ENCODE measurements at regions of chr16 and their contacts with region 1.

Region 1: DNA sequence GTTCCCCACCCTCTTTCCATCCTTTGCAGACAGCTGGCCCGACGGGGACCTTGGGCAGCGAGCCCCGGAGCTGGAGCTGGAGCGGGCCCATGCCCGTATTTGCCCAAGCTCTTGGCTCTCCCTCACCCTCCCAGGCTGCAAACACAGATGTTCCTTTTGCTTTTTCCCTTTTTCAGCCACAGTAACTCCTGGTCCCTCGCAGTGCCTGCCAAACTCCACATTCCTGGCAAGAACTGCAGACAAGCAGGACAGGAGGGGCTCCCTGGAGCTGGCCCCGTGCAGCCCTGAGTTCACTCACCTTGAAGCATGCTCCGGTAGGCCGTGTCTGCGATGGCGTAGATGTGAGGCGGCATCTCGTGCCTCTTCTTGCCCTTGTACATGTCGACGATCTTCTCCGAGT is 33.9 kb downstream of the MYH11 start:
- DNase-seq: no peak
- H3K4me3 Mint-ChIP-seq: no peak overlapping the region
- H3K27ac Mint-ChIP-seq: no peak overlapping the region
- H3K4me1 Mint-ChIP-seq: no peaks in the 10 kb centered on the region
- H3K27me3 Mint-ChIP-seq: peaks cover 2% of the 10 kb centered on the region

Region 2: DNA sequence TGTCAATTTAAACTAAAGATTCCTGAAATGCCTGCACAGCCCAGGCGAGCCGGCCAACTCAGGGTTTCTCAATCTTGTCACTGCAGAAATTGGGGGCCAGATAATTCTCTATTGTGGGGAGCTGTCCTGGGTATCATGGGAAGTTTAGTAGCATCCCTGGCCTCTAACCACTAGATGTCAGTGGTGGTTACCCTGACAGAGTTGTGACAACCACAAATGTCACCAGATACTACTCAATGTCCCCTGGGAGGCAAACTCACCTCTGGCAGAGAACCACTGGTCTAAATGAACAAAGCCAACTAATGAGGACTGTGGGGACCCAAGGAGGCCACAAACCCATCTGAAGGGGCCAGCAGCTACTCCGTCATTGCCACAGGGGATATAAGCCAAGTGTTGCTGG is 57.1 kb before region 1 on chr16:
- CTCF ChIA-PET with region 1: interaction called, 21 read pairs
- POLR2A ChIA-PET with region 1: no interaction called
- intact Hi-C with region 1: no loop called
- DNase-seq: peak; percentile 31
- H3K4me3 Mint-ChIP-seq: no peak overlapping the region
- H3K27ac Mint-ChIP-seq: no peak overlapping the region
- H3K4me1 Mint-ChIP-seq: no peaks in the 10 kb centered on the region
- H3K27me3 Mint-ChIP-seq: peaks cover 14% of the 10 kb centered on the region

Region 3: GRCh38 chr16:15777533-15778203 is 45.3 kb before region 1 on chr16:
- CTCF ChIA-PET with region 1: interaction called, 12 read pairs
- POLR2A ChIA-PET with region 1: no interaction called
- intact Hi-C with region 1: no loop called
- DNase-seq: peak; percentile 35
- H3K4me3 Mint-ChIP-seq: no peak overlapping the region
- H3K27ac Mint-ChIP-seq: no peak overlapping the region
- H3K4me1 Mint-ChIP-seq: no peaks in the 10 kb centered on the region
- H3K27me3 Mint-ChIP-seq: no peaks in the 10 kb centered on the region

Region 4: DNA sequence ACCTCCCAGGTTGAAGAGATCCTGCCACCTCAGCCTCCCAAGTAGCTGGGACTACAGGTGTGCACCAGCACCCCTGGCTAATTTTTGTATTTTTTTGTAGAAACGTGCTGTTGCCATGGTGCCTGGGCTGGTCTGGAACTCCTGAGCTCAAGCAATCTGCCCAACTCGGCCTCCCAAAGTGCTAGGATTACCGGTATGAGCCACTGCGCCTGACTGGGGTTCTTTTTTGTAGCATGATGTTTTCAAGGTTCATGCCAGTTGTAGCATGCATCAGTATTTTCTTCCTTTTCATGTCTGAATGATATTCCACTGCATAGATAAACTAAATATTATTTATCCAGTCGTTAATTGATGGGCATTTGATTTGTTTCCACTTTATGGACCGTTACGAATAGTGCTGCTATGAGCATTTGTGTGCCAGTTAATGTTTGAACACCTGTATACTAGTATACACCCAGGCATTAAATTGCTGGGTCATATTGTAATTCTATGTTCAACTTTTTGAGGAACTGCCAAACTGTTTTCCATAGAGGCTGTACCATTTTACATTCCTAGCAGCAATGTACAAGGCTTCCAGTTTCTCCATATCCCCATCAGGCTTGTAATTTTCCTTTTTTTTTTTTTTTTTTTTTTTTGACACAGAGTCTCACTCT is 90.2 kb after region 1 on chr16:
- CTCF ChIA-PET with region 1: no interaction called
- POLR2A ChIA-PET with region 1: no interaction called
- intact Hi-C with region 1: no loop called
- DNase-seq: no peak
- H3K4me3 Mint-ChIP-seq: no peak overlapping the region
- H3K27ac Mint-ChIP-seq: peak overlapping the region; percentile 7
- H3K4me1 Mint-ChIP-seq: peaks cover 12% of the 10 kb centered on the region
- H3K27me3 Mint-ChIP-seq: no peaks in the 10 kb centered on the region

Region 5: DNA sequence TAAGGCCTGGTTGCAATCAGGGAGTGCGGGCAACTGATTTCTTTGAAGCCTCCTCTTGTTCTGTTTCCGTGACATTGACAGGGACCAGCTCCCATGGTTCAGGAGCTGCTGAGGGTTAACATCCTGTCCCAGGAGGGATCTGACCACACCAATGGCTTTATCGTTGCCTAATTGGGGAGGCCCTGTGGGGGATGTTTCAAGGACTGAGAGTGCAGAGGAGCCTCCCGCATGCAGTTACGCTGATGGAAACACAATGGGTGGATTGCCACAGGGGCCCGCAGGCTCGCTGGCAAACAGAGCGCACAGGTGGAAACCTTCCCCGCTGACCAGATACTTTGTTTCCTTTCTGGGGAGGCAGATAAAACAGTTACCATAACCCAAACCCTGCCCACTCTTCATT is 102.7 kb after region 1 on chr16:
- CTCF ChIA-PET with region 1: no interaction called
- POLR2A ChIA-PET with region 1: no interaction called
- intact Hi-C with region 1: no loop called
- DNase-seq: no peak
- H3K4me3 Mint-ChIP-seq: no peak overlapping the region
- H3K27ac Mint-ChIP-seq: no peak overlapping the region
- H3K4me1 Mint-ChIP-seq: no peaks in the 10 kb centered on the region
- H3K27me3 Mint-ChIP-seq: no peaks in the 10 kb centered on the region

Region 6: GRCh38 chr16:16052916-16053315 is 230.0 kb after region 1 on chr16:
- CTCF ChIA-PET with region 1: no interaction called
- POLR2A ChIA-PET with region 1: no interaction called
- intact Hi-C with region 1: no loop called
- DNase-seq: no peak
- H3K4me3 Mint-ChIP-seq: no peak overlapping the region
- H3K27ac Mint-ChIP-seq: no peak overlapping the region
- H3K4me1 Mint-ChIP-seq: no peaks in the 10 kb centered on the region
- H3K27me3 Mint-ChIP-seq: no peaks in the 10 kb centered on the region

Region 7: GRCh38 chr16:16143038-16143763 is 320.2 kb after region 1 on chr16:
- CTCF ChIA-PET with region 1: no interaction called
- POLR2A ChIA-PET with region 1: no interaction called
- intact Hi-C with region 1: no loop called
- DNase-seq: peak; percentile 15
- H3K4me3 Mint-ChIP-seq: no peak overlapping the region
- H3K27ac Mint-ChIP-seq: no peak overlapping the region
- H3K4me1 Mint-ChIP-seq: no peaks in the 10 kb centered on the region
- H3K27me3 Mint-ChIP-seq: no peaks in the 10 kb centered on the region

Measured in activated CD4-positive, alpha-beta memory T cell treated with anti-CD3 and anti-CD28 coated beads for 36 hours (primary cell).